ENCODE measurements at regions of chr2 and their contacts with region 1.

Region 1: GRCh38 chr2:105166688-105167087 is 74.9 kb upstream of the GPR45 start:
- DNase-seq: no peak
- ATAC-seq: no peak
- H3K4me3 ChIP-seq: no peak overlapping the region
- H3K27ac ChIP-seq: no peak overlapping the region
- H3K4me1 ChIP-seq: no peaks in the 10 kb centered on the region
- H3K27me3 ChIP-seq: peaks cover 0 to 19% (median 0%) of the 10 kb centered on the region in 7 donors
- CTCF ChIP-seq: no peak

Region 2: DNA sequence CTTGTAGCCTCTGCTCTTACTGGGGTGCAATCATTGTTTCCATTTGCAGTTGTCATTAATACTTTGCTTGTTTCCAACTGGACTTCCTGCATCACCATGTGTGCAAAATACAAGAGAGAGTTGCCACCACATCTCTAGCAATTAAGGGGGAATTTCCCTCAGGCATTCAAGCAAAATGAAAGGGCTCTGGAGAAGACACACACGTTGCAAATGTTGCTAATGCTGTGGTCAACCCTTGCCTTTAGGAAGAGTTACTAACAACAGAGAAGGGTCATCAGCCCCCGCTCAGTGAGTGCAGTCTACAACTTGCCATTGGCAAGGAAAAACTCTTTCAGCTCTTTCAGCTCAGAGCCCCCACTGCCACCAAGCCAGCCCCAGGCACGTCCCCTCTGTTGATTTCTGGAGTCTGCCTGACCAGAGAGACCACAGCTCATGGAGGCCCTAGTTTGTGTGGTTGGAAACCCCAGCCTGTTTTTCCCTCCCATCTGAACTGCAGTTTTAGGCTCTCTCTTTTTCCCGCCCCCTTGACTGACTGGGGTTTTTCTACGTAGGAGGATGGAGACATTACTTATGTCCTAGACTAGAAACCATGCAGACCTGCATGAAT is 49.0 kb after region 1 on chr2:
- intact Hi-C with region 1: no loop called
- DNase-seq: no peak
- ATAC-seq: no peak
- H3K4me3 ChIP-seq: no peak overlapping the region
- H3K27ac ChIP-seq: no peak overlapping the region
- H3K4me1 ChIP-seq: no peaks in the 10 kb centered on the region
- H3K27me3 ChIP-seq: peaks cover 0 to 5% (median 0%) of the 10 kb centered on the region in 7 donors
- CTCF ChIP-seq: no peak

Region 3: GRCh38 chr2:105243961-105244360 is 77.3 kb after region 1 on chr2:
- intact Hi-C with region 1: loop called in 1 of 10 experiments (anchors 10 kb)
- DNase-seq: no peak
- ATAC-seq: no peak
- H3K4me3 ChIP-seq: no peak overlapping the region
- H3K27ac ChIP-seq: no peak overlapping the region
- H3K4me1 ChIP-seq: no peaks in the 10 kb centered on the region
- H3K27me3 ChIP-seq: peaks cover 0 to 7% (median 0%) of the 10 kb centered on the region in 7 donors
- CTCF ChIP-seq: peak in 3 of 9 donors; percentile 12 to 16 (median 13)

Measured in heart right ventricle (tissue), 16 donors.